ENCODE measurements at regions of chr3 and their contacts with region 1.

Region 1: DNA sequence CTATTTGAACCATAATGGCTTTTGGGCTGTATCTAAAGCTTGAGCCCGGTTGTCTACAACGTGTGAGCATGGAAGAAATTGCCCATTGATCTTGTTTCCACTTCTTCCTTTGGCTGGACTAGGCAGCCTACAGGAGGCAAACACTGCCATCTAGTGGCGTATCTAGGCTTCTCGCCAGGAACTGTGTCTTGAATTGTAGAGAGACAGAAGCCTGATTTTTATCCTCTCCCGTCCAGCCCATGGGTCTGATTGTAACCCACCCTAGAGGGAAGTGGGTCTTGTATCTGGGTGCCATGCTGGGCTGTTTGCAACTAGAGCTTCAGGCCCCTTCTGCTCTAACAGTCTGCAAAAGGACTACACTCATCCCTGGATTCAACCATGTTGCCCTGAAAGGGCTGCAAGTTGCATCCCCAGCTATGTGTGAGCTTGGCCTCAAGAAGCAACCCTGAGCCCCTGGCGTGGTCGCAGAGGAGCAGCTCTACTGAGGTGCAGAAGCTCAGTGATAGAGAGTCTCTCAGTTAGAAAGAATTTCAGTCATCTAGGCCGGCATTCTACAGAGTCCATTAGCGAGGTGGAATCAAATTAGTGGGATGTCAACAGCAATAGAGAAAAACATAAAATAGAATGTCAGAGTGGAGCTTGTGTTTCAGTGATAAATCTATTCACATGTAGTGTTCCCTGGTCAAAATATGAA is 170.2 kb upstream of the UMPS start:
- DNase-seq: peak; percentile 75
- H3K27ac ChIP-seq: peak overlapping the region; percentile 83
- CTCF ChIP-seq: peak; percentile 87

Region 2: DNA sequence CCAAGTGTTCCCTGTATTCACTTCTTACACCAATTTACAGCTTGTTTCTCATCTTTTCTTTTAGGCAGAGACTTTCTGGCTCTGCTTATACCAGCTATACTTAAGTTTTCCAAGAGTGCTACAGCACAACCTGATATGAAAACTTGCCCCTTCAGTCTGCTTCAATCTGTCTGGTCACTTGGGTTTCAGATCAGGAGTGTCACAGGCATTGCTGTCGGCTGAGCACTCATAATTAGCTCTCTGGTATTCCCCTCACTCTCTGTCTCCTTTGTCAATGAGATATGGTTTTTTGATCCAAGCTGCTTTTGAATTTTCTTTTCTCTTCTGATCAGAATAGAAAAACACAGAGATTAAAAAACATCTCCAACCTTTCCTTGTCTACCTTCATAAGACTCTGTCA is 24.7 kb before region 1 on chr3:
- CTCF ChIA-PET with region 1: no interaction called
- POLR2A ChIA-PET with region 1: no interaction called
- DNase-seq: no peak
- H3K27ac ChIP-seq: no peak overlapping the region
- CTCF ChIP-seq: no peak

Region 3: GRCh38 chr3:124688581-124689454 is 128.8 kb after region 1 on chr3:
- CTCF ChIA-PET with region 1: interaction called, 61 read pairs
- POLR2A ChIA-PET with region 1: no interaction called
- DNase-seq: peak; percentile 85
- H3K27ac ChIP-seq: no peak overlapping the region
- CTCF ChIP-seq: peak; percentile 89

Region 4: DNA sequence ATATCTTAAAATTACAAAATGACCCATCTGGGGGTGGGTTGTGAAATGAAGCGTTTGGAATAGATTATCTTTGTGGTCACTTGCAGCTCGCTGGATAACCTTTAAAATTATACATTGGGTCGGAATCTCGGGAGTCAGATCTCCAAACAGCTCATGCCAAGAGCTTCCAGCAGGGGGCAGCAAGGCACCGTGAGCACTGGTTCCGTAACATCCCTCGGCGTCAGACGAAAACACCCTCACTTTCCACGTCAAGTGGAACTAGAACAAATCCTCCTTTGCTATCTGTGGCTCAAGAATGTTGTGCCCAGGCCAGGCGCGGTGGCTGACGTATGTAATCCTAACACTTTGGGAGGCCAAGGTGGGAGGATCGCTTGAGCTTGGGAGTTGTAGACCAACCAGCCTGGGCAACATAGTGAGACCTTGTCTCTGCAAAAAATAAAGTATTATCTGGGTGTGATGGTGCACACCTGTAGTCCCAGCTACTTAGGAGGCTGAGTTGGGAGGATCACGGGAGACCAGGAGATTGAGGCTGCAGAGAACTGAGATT is 201.3 kb after region 1 on chr3:
- CTCF ChIA-PET with region 1: no interaction called
- POLR2A ChIA-PET with region 1: no interaction called
- DNase-seq: peak; percentile 63
- H3K27ac ChIP-seq: no peak overlapping the region
- CTCF ChIP-seq: peak; percentile 94

Region 5: DNA sequence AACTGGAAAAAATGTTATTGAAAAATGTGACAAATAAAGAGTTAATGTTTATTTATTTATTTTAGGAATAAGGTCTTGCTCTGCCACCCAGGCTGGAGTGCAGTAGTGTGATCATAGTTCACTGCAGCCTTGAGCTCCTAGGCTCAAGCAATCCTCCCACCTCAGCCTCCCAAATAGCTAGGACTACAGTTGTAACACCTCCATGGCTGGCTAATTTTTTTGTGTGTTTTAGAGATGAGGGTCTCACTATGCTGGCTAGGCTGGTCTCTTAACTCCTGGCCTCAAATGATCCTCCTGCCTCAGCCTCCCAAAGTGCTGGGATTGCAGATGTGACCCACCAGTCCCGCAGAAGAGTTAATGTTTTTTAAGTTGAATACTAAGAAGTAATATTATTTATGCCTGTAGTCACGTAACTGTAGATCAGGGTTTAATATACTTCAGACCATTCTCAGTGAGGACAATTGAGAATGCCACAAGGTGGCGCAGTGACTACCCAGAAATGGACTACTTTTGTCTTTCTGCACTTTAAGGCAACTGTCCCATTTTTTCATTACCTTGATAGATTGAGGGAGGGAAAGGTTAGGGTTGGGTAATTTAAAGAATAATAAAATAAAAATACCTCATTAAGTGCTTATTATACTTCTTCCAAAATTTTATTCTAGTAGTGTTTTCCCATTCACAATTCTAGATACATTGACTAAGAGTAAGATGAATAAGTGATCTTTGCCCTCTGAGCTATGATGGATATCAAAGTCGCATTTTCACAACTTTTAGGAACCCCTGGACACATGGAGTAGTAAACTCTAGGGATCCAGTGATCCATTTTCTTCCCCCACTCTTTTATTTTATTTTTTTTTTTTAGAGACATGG is 368.5 kb after region 1 on chr3:
- CTCF ChIA-PET with region 1: no interaction called
- POLR2A ChIA-PET with region 1: no interaction called
- DNase-seq: peak; percentile 44
- H3K27ac ChIP-seq: no peak overlapping the region
- CTCF ChIP-seq: peak; percentile 83

Region 6: DNA sequence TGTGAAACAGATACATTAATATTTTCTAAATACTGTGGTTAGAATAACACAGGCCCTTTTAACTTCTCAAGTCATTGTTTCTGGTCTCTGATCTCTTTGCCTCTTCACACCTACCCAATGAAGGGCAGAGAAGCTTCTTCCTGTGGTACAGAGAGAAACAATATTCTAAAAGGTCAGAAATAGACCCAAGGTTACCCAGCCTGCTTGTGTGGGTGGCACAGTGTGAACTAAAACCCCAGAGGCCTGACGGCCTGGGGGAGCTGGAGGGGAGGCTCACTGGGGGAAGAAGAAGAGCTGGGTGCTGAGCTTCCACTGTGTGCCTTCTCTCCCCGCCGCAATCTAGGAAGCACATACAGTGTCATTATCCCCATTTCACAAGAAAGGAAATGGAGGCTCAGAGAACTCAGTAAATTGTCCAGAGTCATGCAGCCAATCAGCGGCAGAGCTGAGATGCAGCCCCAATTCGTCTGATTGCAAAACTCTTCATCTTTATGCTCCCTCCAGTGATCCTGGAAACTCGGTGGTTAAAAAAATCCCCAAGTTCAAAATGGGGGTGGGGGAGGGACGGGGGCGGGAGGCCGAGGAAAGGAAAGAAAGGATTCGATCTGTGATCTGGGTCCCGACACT is 559.8 kb after region 1 on chr3:
- CTCF ChIA-PET with region 1: no interaction called
- POLR2A ChIA-PET with region 1: no interaction called
- DNase-seq: no peak
- H3K27ac ChIP-seq: no peak overlapping the region; the same call in 1 of the 2 replicates
- CTCF ChIP-seq: no peak